CD8-positive, alpha-beta memory T cell (primary cell): ENCODE measurements at regions of chr5 and their contacts with region 1.

Region 1: GRCh38 chr5:151164686-151165392 is 7.3 kb upstream of the ANXA6 start:
- DNase-seq: peak; percentile 59 to 85 (median 70)
- H3K4me3 ChIP-seq: no peak overlapping the region
- H3K4me3 Mint-ChIP-seq: peak overlapping the region in 1 of 7 donors; percentile 49
- H3K27ac ChIP-seq: no peak overlapping the region
- H3K27ac Mint-ChIP-seq: peak overlapping the region in 5 of 8 donors; percentile 10 to 89 (median 42)
- H3K4me1 ChIP-seq: peaks cover 9% of the 10 kb centered on the region
- H3K4me1 Mint-ChIP-seq: peaks cover 13 to 20% (median 14%) of the 10 kb centered on the region in 3 donors
- H3K27me3 ChIP-seq: no peaks in the 10 kb centered on the region
- H3K27me3 Mint-ChIP-seq: peaks cover 0 to 2% of the 10 kb centered on the region in 2 donors

Region 2: DNA sequence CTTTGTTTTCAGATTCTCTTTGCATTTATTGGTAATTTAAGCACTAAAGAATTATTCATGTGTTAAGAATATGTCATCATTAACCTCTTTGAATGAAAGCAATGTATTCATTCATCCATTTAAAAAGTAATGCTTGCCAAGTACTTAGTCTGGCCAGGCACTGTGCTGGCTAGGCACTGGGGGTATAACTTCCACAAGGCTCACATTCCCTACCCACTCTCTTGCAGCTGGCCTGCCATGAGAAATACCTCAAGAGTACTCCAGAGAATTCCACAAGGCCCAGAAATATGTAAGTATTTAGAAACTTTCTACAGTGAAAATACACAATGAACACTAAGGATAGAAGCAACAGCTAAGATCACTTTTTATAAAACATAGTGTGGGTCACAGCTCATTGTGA is 285.5 kb before region 1 on chr5:
- CTCF ChIA-PET with region 1: no interaction called
- POLR2A ChIA-PET with region 1: no interaction called
- DNase-seq: no peak
- H3K4me3 ChIP-seq: no peak overlapping the region
- H3K4me3 Mint-ChIP-seq: no peak overlapping the region
- H3K27ac ChIP-seq: no peak overlapping the region
- H3K27ac Mint-ChIP-seq: no peak overlapping the region
- H3K4me1 ChIP-seq: no peaks in the 10 kb centered on the region
- H3K4me1 Mint-ChIP-seq: no peaks in the 10 kb centered on the region
- H3K27me3 ChIP-seq: no peaks in the 10 kb centered on the region
- H3K27me3 Mint-ChIP-seq: no peaks in the 10 kb centered on the region

Region 3: GRCh38 chr5:151051066-151051930 is 113.5 kb before region 1 on chr5:
- CTCF ChIA-PET with region 1: interaction called, 32 read pairs
- POLR2A ChIA-PET with region 1: no interaction called
- DNase-seq: peak; percentile 49 to 81 (median 57)
- H3K4me3 ChIP-seq: no peak overlapping the region
- H3K4me3 Mint-ChIP-seq: no peak overlapping the region
- H3K27ac ChIP-seq: no peak overlapping the region
- H3K27ac Mint-ChIP-seq: peak overlapping the region in 5 of 8 donors; percentile 54 to 79 (median 74)
- H3K4me1 ChIP-seq: no peaks in the 10 kb centered on the region
- H3K4me1 Mint-ChIP-seq: peaks cover 9 to 23% (median 17%) of the 10 kb centered on the region in 3 donors
- H3K27me3 ChIP-seq: no peaks in the 10 kb centered on the region
- H3K27me3 Mint-ChIP-seq: no peaks in the 10 kb centered on the region

Region 4: GRCh38 chr5:151134238-151134637 is 30.6 kb before region 1 on chr5:
- CTCF ChIA-PET with region 1: interaction called, 308 read pairs
- POLR2A ChIA-PET with region 1: interaction called, 4 read pairs
- DNase-seq: no peak
- H3K4me3 ChIP-seq: no peak overlapping the region
- H3K4me3 Mint-ChIP-seq: no peak overlapping the region
- H3K27ac ChIP-seq: no peak overlapping the region
- H3K27ac Mint-ChIP-seq: peak overlapping the region in 6 of 8 donors; percentile 6 to 92 (median 62)
- H3K4me1 ChIP-seq: peaks cover 43% of the 10 kb centered on the region
- H3K4me1 Mint-ChIP-seq: peaks cover 46 to 74% (median 74%) of the 10 kb centered on the region in 3 donors
- H3K27me3 ChIP-seq: no peaks in the 10 kb centered on the region
- H3K27me3 Mint-ChIP-seq: no peaks in the 10 kb centered on the region

Region 5: DNA sequence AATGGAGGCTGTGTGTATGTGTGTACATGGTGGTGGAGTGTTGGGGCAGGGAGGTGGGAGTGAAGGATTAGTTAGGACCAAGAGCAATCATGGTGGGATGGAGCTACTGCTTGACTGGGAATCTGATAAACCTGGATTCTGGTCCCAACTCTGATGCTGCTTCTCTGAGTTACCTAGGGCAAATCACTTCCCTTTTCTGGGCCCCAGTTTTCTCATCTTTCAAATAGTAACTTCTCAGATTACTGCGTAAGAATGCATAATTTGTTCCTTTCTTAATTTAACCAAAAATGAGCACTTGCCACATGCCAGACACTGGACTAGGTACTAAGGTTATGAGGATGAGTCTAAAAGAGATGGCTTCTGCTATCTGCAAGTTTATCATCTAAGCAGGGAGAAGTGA is 13.5 kb after region 1 on chr5:
- CTCF ChIA-PET with region 1: interaction called, 12 read pairs
- POLR2A ChIA-PET with region 1: no interaction called
- DNase-seq: no peak
- H3K4me3 ChIP-seq: no peak overlapping the region
- H3K4me3 Mint-ChIP-seq: no peak overlapping the region
- H3K27ac ChIP-seq: no peak overlapping the region
- H3K27ac Mint-ChIP-seq: peak overlapping the region in 6 of 8 donors; percentile 12 to 95 (median 48)
- H3K4me1 ChIP-seq: no peaks in the 10 kb centered on the region
- H3K4me1 Mint-ChIP-seq: peaks cover 0 to 7% (median 6%) of the 10 kb centered on the region in 3 donors
- H3K27me3 ChIP-seq: no peaks in the 10 kb centered on the region
- H3K27me3 Mint-ChIP-seq: no peaks in the 10 kb centered on the region

Region 6: GRCh38 chr5:151213800-151214613 is 49.2 kb after region 1 on chr5:
- CTCF ChIA-PET with region 1: interaction called, 14 read pairs
- POLR2A ChIA-PET with region 1: interaction called, 3 read pairs
- DNase-seq: peak; percentile 75 to 93 (median 83)
- H3K4me3 ChIP-seq: peak overlapping the region; percentile 85
- H3K4me3 Mint-ChIP-seq: peak overlapping the region; percentile 83 to 95 (median 93)
- H3K27ac ChIP-seq: peak overlapping the region; percentile 91
- H3K27ac Mint-ChIP-seq: peak overlapping the region; percentile 91 to 99 (median 98)
- H3K4me1 ChIP-seq: peaks cover 95% of the 10 kb centered on the region
- H3K4me1 Mint-ChIP-seq: peaks cover 82 to 95% (median 90%) of the 10 kb centered on the region in 3 donors
- H3K27me3 ChIP-seq: no peaks in the 10 kb centered on the region
- H3K27me3 Mint-ChIP-seq: peaks cover 0 to 2% of the 10 kb centered on the region in 2 donors

Region 7: GRCh38 chr5:151239237-151239861 is 74.5 kb after region 1 on chr5:
- CTCF ChIA-PET with region 1: interaction called, 20 read pairs
- POLR2A ChIA-PET with region 1: no interaction called
- DNase-seq: peak; percentile 42 to 73 (median 53)
- H3K4me3 ChIP-seq: no peak overlapping the region
- H3K4me3 Mint-ChIP-seq: peak overlapping the region in 6 of 7 donors; percentile 9 to 84 (median 50)
- H3K27ac ChIP-seq: no peak overlapping the region
- H3K27ac Mint-ChIP-seq: peak overlapping the region in 2 of 8 donors; percentile 12 to 25
- H3K4me1 ChIP-seq: peaks cover 17% of the 10 kb centered on the region
- H3K4me1 Mint-ChIP-seq: peaks cover 23 to 45% (median 25%) of the 10 kb centered on the region in 3 donors
- H3K27me3 ChIP-seq: no peaks in the 10 kb centered on the region
- H3K27me3 Mint-ChIP-seq: no peaks in the 10 kb centered on the region